PC-9 (cell line): ENCODE measurements at regions of chr9 and their contacts with region 1.

Region 1: DNA sequence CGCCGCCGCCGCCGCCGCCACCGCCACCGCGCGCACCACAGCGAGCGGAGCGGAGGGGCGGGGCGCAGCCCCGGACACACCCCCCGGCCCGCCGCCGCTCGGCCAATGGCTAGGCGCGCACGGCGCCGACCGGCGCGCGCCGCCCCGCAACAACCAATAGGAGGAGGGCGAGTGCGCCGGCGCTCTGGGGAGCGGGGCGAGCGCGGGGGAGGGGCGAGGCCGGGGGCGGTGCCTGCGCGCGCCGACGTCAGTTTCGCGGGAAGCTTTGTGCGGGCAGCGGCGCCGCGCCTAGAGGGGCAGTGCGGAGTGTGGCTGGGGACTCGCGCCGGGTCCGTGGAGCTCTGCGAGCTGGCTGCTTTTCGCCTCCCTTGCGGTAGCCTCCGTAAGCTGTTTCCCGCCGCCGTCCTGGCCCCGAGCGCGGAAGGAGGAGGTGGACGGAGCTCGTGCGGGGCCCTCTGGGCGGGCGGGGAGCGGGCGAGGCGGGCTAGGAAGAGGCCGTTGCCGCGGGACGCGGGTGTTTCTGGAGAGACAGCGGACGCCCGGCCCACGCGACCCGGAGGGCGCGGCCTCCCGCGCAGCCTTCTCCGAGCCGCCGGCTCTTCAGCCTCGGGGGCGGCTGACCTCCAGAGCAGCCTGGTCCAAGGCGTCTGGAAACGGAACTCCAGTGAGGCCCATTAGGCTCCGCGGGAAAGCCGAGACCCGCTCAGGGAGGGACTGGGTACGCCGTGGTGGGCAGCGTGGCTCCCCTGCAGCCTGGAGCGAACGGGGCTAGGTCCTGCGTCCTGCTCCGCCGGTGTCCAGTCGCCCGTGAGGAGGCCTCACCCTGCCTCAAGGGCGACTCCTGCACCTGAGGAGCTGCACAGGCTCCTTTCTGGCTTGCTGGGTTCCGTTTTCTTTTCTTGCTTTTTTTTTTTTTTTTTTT is at the start of gene ZMYND19:
- DNase-seq: peak; percentile 65 to 94
- H3K4me3 ChIP-seq: peak within 1 kb of the TSS; percentile 91
- H3K27ac ChIP-seq: no peak within 1 kb of the TSS
- H3K4me1 ChIP-seq: peaks cover 13% of the 10 kb centered on the region
- H3K27me3 ChIP-seq: no peaks in the 10 kb centered on the region
- CTCF ChIP-seq: no peak; the same call in 1 of the 2 replicates
- total RNA-seq, gene ZMYND19: 47.7 and 49.2 TPM in 2 replicates

Region 2: GRCh38 chr9:136363606-136364370 is 1226.9 kb before region 1 on chr9 and contains the start of gene DNLZ:
- CTCF ChIA-PET with region 1: no interaction called
- POLR2A ChIA-PET with region 1: no interaction called
- intact Hi-C with region 1: no loop called
- DNase-seq: peak; percentile 52 to 89
- H3K4me3 ChIP-seq: peak within 1 kb of the TSS; percentile 77
- H3K27ac ChIP-seq: peak within 1 kb of the TSS; percentile 65
- H3K4me1 ChIP-seq: peaks cover 12% of the 10 kb centered on the region
- H3K27me3 ChIP-seq: no peaks in the 10 kb centered on the region
- CTCF ChIP-seq: peak; percentile 90
- total RNA-seq, gene DNLZ: 9.1 and 19.1 TPM in 2 replicates

Region 3: GRCh38 chr9:136910901-136911245 is 679.9 kb before region 1 on chr9:
- CTCF ChIA-PET with region 1: no interaction called
- POLR2A ChIA-PET with region 1: no interaction called
- intact Hi-C with region 1: no loop called
- DNase-seq: no peak
- H3K4me3 ChIP-seq: no peak overlapping the region
- H3K27ac ChIP-seq: no peak overlapping the region
- H3K4me1 ChIP-seq: no peaks in the 10 kb centered on the region
- H3K27me3 ChIP-seq: no peaks in the 10 kb centered on the region
- CTCF ChIP-seq: no peak

Region 4: GRCh38 chr9:137605121-137606004 is 14.6 kb after region 1 on chr9 and contains the start of gene ARRDC1:
- CTCF ChIA-PET with region 1: interaction called, 5 read pairs
- POLR2A ChIA-PET with region 1: interaction called, 3 read pairs
- intact Hi-C with region 1: loop called (anchors 2 kb)
- DNase-seq: peak; percentile 80 to 95
- H3K4me3 ChIP-seq: peak within 1 kb of the TSS; percentile 57
- H3K27ac ChIP-seq: peak within 1 kb of the TSS; percentile 30; the same call in 1 of the 2 replicates
- H3K4me1 ChIP-seq: peaks cover 38% of the 10 kb centered on the region
- H3K27me3 ChIP-seq: no peaks in the 10 kb centered on the region
- CTCF ChIP-seq: no peak
- total RNA-seq, gene ARRDC1: 116 and 127 TPM in 2 replicates

Region 5: GRCh38 chr9:137639303-137640051 is 48.8 kb after region 1 on chr9:
- CTCF ChIA-PET with region 1: no interaction called
- POLR2A ChIA-PET with region 1: no interaction called
- intact Hi-C with region 1: no loop called
- DNase-seq: no peak
- H3K4me3 ChIP-seq: no peak overlapping the region
- H3K27ac ChIP-seq: no peak overlapping the region
- H3K4me1 ChIP-seq: no peaks in the 10 kb centered on the region
- H3K27me3 ChIP-seq: no peaks in the 10 kb centered on the region
- CTCF ChIP-seq: no peak